ENCODE measurements at regions of chr11 and their contacts with region 1.

Region 1: DNA sequence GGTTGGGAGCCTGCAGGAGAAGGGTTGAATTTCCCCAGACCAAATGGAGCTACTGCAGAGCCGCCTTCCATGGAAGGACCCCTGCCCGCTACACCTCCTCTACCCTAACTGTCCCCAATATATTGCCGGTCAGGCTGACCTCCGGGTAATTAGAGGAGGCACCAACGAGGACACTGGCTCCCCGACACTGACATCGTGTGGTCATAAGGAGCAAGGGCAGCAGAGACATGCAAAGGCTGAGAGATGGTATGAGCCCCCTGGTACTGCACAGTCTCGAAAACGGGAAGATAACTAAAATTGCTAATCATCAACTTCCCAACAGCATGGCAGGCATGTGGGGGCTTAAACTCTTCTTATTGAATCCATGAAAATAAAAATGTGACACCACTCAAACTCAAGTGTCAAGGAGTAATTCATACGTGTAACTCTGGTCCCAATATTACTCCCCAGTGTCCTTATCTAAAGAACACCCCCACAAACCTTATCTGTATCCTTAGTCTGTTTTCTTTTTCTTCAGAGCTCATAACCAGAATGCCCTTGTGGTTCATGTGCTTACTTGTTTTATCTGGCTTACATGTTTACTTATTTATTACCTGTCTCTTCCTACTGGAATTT is 4.4 kb downstream of the CAVIN3 start:
- DNase-seq: peak; percentile 71 to 76
- H3K4me3 ChIP-seq: peak overlapping the region; percentile 24 to 32
- H3K27ac ChIP-seq: peak overlapping the region; percentile 38 to 100
- H3K4me1 ChIP-seq: peaks cover 0 to 37% (median 24%) of the 10 kb centered on the region in 4 donors
- H3K27me3 ChIP-seq: no peaks in the 10 kb centered on the region
- CTCF ChIP-seq: peak; percentile 83 to 88

Region 2: DNA sequence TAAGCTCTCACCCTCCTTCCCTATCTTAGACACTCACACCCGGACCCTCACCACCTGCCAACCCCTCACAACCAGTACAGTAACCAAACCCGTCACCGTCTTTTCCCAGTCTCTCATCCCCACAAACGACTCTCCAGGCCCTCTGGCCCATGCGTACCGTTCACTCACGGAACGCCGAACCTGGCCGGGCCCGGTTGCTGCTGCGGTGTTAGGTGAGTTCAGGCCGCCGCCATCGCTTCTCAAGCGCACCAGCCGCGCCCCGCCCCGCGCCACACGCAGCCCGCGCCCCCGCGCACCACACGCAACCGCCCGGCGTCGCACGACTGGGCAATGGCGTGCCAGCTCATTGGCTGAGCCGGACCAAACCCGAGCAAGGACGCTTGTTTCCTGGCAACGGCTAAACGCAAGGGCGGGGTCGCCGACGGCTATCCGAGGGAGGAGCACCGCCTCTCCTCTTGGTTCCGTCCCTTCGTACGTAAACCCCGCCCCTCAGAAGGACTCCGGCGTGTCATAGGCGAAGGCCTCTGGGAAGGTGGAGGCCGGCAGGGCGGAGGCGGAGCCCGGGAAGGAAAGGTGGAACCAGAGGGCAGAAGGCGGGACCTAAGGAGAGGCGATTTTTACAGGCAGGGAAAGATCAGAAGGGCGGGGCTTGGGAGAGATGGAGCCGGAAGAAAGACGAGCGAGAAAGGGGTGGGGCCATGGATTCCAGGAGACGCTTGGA is 81.4 kb before region 1 on chr11 and contains the start of gene FHIP1B:
- intact Hi-C with region 1: no loop called
- DNase-seq: peak; percentile 100
- H3K4me3 ChIP-seq: peak within 1 kb of the TSS; percentile 78 to 81
- H3K27ac ChIP-seq: peak within 1 kb of the TSS; percentile 84 to 87
- H3K4me1 ChIP-seq: peaks cover 0 to 18% (median 14%) of the 10 kb centered on the region in 4 donors
- H3K27me3 ChIP-seq: no peaks in the 10 kb centered on the region
- CTCF ChIP-seq: no peak

Region 3: GRCh38 chr11:6357222-6357621 is 41.3 kb after region 1 on chr11:
- intact Hi-C with region 1: loop called (anchors 5 kb)
- DNase-seq: peak; percentile 60 to 89
- H3K4me3 ChIP-seq: no peak overlapping the region
- H3K27ac ChIP-seq: peak overlapping the region; percentile 73 to 79
- H3K4me1 ChIP-seq: peaks cover 0 to 33% (median 18%) of the 10 kb centered on the region in 4 donors
- H3K27me3 ChIP-seq: no peaks in the 10 kb centered on the region
- CTCF ChIP-seq: no peak

Region 4: GRCh38 chr11:6377902-6378639 is 62.2 kb after region 1 on chr11:
- intact Hi-C with region 1: no loop called
- DNase-seq: peak in 1 of 2 donors; percentile 38
- H3K4me3 ChIP-seq: no peak overlapping the region
- H3K27ac ChIP-seq: no peak overlapping the region
- H3K4me1 ChIP-seq: no peaks in the 10 kb centered on the region
- H3K27me3 ChIP-seq: peaks cover 0 to 2% of the 10 kb centered on the region in 2 donors
- CTCF ChIP-seq: no peak